ENCODE measurements at regions of chr17 and their contacts with region 1.

Region 1: GRCh38 chr17:45317112-45317928 is 500 bp upstream of the MAP3K14 start:
- DNase-seq: peak; percentile 100
- ATAC-seq: peak; percentile 91

Region 2: DNA sequence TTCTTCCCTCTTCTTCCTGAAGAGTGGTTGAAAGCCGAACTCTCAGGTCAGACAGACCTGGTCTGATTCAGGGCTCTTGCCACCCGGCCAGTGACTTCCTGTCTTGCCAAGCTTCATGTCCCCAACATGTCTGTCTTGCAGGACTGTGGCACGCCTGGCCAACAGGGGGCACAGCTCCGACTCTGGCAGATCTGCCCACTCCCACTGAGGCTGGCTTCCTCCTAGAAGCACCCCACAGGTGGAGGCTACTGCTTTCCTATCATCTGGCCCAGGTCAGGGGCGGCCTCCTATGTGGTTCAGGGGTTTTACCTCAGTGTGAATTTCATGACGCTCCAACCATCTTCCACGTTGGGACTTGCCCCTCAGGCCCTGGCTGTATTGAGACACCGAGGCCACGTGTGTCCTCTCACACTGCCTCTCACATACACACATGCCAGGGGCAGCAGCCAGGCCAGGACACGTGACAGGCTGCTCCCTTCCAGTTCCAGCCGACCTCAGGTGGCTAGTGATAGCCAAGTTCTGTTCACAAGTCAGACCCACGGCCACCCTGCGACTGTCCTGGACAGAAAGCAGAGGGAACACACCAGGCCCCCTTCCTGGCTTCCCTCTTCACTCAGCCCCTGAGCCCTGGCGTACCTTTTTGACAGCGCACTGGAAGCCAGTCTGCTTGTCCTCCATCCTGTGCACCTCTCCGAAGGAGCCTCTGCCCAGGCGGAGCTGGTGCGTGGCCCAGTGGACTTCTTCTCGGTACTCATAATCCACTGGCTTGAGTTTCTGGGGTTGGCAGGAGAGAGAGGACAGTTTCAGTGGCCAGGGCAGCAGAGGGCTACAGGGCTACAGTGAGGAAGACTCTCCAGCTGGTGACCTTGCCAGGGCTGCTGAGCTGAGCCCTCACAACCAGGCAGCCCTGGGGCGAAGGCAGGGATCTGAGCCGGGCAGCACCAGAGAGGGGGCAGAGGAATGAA is 32.9 kb before region 1 on chr17:
- intact Hi-C with region 1: loop called (anchors 5 kb)
- DNase-seq: peak; percentile 85
- ATAC-seq: peak; percentile 66

Region 3: DNA sequence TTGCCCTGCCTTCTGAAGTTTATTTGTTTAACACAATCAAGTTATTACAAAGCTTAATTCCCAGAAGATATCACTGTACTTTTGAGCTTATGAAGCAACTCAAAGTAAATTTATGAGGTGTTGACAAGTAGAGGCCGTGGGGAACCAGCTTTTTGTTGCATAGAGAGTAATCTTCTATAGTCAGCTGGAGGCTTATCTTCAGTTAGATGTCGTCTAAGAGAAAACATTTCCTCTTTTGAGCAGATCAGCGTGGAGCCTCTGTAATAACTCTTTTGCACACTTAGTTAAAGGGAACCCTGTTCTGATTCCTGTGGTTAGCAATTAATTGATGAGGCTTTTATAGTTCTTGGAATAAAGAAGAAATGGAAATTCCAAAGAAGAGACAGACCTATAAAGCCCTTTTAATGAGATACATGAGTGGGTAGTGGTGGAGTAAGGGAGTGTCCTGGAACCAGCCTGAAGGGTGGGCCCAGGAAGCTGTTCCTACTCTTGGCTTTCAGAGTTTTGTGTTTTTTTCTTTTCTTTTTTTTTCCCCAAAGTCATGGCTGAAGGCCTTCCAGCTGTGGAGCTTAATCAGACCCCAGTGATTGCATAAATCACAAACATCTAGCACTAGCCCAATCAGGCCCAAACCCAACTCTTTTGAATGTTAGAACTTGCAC is 28.4 kb after region 1 on chr17:
- intact Hi-C with region 1: no loop called
- DNase-seq: no peak
- ATAC-seq: peak; percentile 76

Region 4: DNA sequence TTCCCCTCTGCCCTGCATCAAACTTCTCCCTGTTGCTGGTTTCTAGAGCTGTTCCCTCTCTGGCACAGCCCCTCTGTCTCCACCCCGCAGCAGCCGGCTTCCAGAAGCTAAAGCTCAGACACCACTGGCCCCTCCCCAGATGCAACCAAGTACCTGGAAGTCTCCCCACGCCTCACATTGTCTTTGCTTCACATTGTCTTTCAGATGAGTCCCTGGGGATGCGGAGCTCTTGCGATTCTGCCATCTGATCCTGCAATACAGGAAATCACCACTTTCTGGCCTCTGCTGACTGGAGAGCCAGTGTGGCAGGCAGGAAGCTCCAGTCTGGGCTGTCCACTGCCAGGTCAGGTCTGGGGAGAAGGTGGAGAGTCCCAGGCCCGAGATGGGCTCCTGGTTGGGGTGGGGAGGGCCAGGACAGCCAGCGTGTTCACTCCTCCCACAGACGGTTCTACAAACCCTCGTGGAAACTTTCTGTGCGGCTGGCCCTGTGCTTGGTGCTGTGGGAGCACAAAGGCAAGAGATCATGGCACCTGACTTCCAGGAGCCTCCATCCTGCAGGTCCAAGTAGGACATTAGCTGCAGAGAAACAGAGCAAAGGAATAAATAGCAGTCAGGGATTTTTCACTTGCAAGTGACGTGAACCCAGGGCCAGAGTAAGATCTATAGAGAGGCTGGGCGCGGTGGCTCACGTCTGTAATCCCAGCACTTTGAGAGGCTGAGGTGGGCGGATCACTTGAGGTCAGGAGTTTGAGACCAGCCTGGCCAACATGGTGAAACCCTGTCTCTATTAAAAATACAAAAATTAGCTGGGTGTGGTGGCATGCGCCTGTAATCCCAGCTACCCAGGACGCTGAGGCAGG is 47.4 kb after region 1 on chr17:
- intact Hi-C with region 1: loop called (anchors 5 kb)
- DNase-seq: no peak
- ATAC-seq: no peak